CD4-positive, alpha-beta T cell (primary cell): ENCODE measurements at regions of chr13 and their contacts with region 1.

Region 1: DNA sequence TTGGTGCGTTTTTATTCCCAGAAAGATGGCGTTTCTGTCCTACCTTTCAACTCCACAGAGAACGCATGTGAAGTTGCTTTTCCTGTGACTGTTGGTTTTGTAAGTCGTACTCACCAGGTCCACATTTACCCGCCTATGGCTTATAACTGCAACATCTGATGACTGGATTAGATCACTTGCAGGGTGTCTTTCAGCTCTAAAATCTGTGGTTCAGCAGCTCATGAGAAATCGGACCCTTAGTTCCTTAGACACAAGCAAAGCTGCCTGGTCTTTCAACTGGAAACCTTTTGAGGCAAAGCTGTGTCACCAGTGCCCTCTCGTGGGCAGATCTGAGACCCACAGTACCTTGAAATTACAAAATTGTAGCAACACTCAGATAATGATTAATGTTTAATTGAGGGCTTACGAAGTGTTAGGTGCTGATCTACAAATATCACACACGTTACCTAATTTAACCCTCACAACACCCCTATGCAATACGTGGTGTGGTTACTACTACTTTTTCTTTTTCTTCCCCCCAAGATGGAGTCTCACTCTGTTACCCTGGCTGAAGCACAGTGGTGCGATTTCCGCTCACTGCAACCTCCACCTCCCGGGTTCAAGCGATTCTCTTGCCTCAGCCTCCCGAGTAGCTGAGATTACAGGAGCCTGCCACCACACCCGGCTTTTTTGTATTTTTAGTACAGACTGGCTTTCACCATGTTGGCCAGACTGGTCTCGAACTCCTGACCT is 65.4 kb downstream of the RUBCNL start:
- DNase-seq: peak; percentile 63 to 88 (median 70)
- ATAC-seq: peak; percentile 90
- H3K4me3 ChIP-seq: peak overlapping the region; percentile 37
- H3K4me3 Mint-ChIP-seq: peak overlapping the region; percentile 82
- H3K27ac ChIP-seq: peak overlapping the region; percentile 33 to 46
- H3K27ac Mint-ChIP-seq: peak overlapping the region; percentile 91
- H3K4me1 ChIP-seq: peaks cover 19% of the 10 kb centered on the region
- H3K4me1 Mint-ChIP-seq: peaks cover 43% of the 10 kb centered on the region
- H3K27me3 ChIP-seq: no peaks in the 10 kb centered on the region
- H3K27me3 Mint-ChIP-seq: peaks cover 3% of the 10 kb centered on the region
- CTCF ChIP-seq: peak; percentile 92

Region 2: GRCh38 chr13:45623515-45624090 is 698.1 kb before region 1 on chr13:
- CTCF ChIA-PET with region 1: no interaction called
- POLR2A ChIA-PET with region 1: no interaction called
- intact Hi-C with region 1: loop called (anchors 2 to 5 kb)
- DNase-seq: peak in 3 of 14 experiments; percentile 11 to 49 (median 41)
- ATAC-seq: no peak
- H3K4me3 ChIP-seq: no peak overlapping the region
- H3K4me3 Mint-ChIP-seq: no peak overlapping the region
- H3K27ac ChIP-seq: no peak overlapping the region
- H3K27ac Mint-ChIP-seq: no peak overlapping the region
- H3K4me1 ChIP-seq: peaks cover 9% of the 10 kb centered on the region
- H3K4me1 Mint-ChIP-seq: no peaks in the 10 kb centered on the region
- H3K27me3 ChIP-seq: peaks cover 14 to 24% of the 10 kb centered on the region in 2 experiments
- H3K27me3 Mint-ChIP-seq: peaks cover 48% of the 10 kb centered on the region
- CTCF ChIP-seq: peak; percentile 64

Region 3: GRCh38 chr13:46126552-46127357 is 194.9 kb before region 1 on chr13:
- CTCF ChIA-PET with region 1: interaction called, 6 read pairs
- POLR2A ChIA-PET with region 1: no interaction called
- intact Hi-C with region 1: loop called in 1 of 2 experiments (anchors 1 kb)
- DNase-seq: peak; percentile 55 to 85 (median 70)
- ATAC-seq: peak; percentile 93
- H3K4me3 ChIP-seq: no peak overlapping the region
- H3K4me3 Mint-ChIP-seq: peak overlapping the region; percentile 40
- H3K27ac ChIP-seq: peak overlapping the region; percentile 37 to 52
- H3K27ac Mint-ChIP-seq: peak overlapping the region; percentile 87
- H3K4me1 ChIP-seq: peaks cover 26% of the 10 kb centered on the region
- H3K4me1 Mint-ChIP-seq: peaks cover 48% of the 10 kb centered on the region
- H3K27me3 ChIP-seq: no peaks in the 10 kb centered on the region
- H3K27me3 Mint-ChIP-seq: no peaks in the 10 kb centered on the region
- CTCF ChIP-seq: peak; percentile 75

Region 4: GRCh38 chr13:46176756-46177155 is 144.9 kb before region 1 on chr13:
- CTCF ChIA-PET with region 1: interaction called, 7 read pairs
- POLR2A ChIA-PET with region 1: interaction called, 11 read pairs
- intact Hi-C with region 1: no loop called
- DNase-seq: peak in 4 of 14 experiments; percentile 38 to 71 (median 60)
- ATAC-seq: no peak
- H3K4me3 ChIP-seq: peak overlapping the region; percentile 84
- H3K4me3 Mint-ChIP-seq: peak overlapping the region; percentile 72
- H3K27ac ChIP-seq: peak overlapping the region; percentile 58 to 75
- H3K27ac Mint-ChIP-seq: peak overlapping the region; percentile 98
- H3K4me1 ChIP-seq: peaks cover 46% of the 10 kb centered on the region
- H3K4me1 Mint-ChIP-seq: peaks cover 77% of the 10 kb centered on the region
- H3K27me3 ChIP-seq: no peaks in the 10 kb centered on the region
- H3K27me3 Mint-ChIP-seq: no peaks in the 10 kb centered on the region
- CTCF ChIP-seq: no peak

Region 5: GRCh38 chr13:46288570-46289259 is 32.9 kb before region 1 on chr13:
- CTCF ChIA-PET with region 1: interaction called, 5 read pairs
- POLR2A ChIA-PET with region 1: interaction called, 14 read pairs
- intact Hi-C with region 1: loop called (anchors 2 to 5 kb)
- DNase-seq: peak in 4 of 14 experiments; percentile 23 to 79 (median 77)
- ATAC-seq: peak; percentile 96
- H3K4me3 ChIP-seq: no peak overlapping the region
- H3K4me3 Mint-ChIP-seq: no peak overlapping the region
- H3K27ac ChIP-seq: no peak overlapping the region
- H3K27ac Mint-ChIP-seq: peak overlapping the region; percentile 11
- H3K4me1 ChIP-seq: peaks cover 5% of the 10 kb centered on the region
- H3K4me1 Mint-ChIP-seq: peaks cover 22% of the 10 kb centered on the region
- H3K27me3 ChIP-seq: no peaks in the 10 kb centered on the region
- H3K27me3 Mint-ChIP-seq: no peaks in the 10 kb centered on the region
- CTCF ChIP-seq: peak; percentile 90

Region 6: DNA sequence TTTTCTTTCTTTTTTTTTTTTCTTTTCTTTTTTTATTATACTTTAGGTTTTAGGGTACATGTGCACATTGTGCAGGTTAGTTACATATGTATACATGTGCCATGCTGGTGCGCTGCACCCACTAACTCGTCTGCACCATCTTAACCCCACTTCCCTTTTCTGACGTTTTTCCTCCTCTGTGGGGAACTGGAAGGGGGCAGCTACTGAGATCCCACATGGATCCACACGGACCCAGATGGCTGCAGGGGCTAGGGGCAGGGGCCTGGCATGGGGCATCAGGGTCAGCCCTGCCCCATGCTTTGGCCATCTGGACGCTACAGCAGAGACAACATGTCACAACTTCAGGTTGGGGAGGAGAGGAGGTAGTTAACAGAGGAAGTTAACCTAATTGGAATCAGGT is 11.1 kb after region 1 on chr13:
- CTCF ChIA-PET with region 1: no interaction called
- POLR2A ChIA-PET with region 1: interaction called, 12 read pairs
- intact Hi-C with region 1: no loop called
- DNase-seq: no peak
- ATAC-seq: no peak
- H3K4me3 ChIP-seq: no peak overlapping the region
- H3K4me3 Mint-ChIP-seq: no peak overlapping the region
- H3K27ac ChIP-seq: no peak overlapping the region
- H3K27ac Mint-ChIP-seq: peak overlapping the region; percentile 25
- H3K4me1 ChIP-seq: peaks cover 16% of the 10 kb centered on the region
- H3K4me1 Mint-ChIP-seq: peaks cover 26% of the 10 kb centered on the region
- H3K27me3 ChIP-seq: no peaks in the 10 kb centered on the region
- H3K27me3 Mint-ChIP-seq: no peaks in the 10 kb centered on the region
- CTCF ChIP-seq: no peak